Ovary (tissue), 10 donors: ENCODE measurements at regions of chr22 and their contacts with region 1.

Region 1: GRCh38 chr22:30262917-30263741 is 3.5 kb downstream of the OSM start:
- DNase-seq: peak; percentile 66 to 84 (median 83)
- H3K4me3 ChIP-seq: no peak overlapping the region
- H3K27ac ChIP-seq: no peak overlapping the region
- H3K4me1 ChIP-seq: no peaks in the 10 kb centered on the region
- H3K27me3 ChIP-seq: no peaks in the 10 kb centered on the region
- CTCF ChIP-seq: peak; percentile 95 to 97 (median 95)
- EP300 ChIP-seq: no peak
- POLR2A ChIP-seq: no peak

Region 2: DNA sequence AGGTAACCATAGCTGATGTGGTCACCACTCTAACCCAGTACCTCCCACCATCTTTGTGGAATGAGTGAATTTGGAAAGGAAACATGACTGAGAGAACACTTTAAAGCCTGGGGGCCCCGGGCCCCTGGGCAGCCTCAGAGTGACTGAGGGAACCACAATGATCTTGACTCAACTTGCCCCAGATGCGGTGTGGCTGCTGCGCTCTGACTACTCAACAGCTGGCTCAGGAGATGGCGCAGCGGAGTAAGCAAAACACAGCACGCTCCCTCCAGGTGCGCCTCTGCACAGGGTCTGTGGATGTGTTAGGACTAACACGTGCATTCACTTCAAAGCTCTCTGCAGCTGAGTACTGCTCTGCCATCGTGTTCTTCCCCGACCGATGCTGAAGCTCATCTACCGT is 118.1 kb after region 1 on chr22:
- intact Hi-C with region 1: loop called in 3 of 4 experiments (anchors 2 to 5 kb)
- DNase-seq: no peak
- H3K4me3 ChIP-seq: no peak overlapping the region
- H3K27ac ChIP-seq: no peak overlapping the region
- H3K4me1 ChIP-seq: no peaks in the 10 kb centered on the region
- H3K27me3 ChIP-seq: no peaks in the 10 kb centered on the region
- CTCF ChIP-seq: no peak
- EP300 ChIP-seq: no peak
- POLR2A ChIP-seq: no peak

Region 3: DNA sequence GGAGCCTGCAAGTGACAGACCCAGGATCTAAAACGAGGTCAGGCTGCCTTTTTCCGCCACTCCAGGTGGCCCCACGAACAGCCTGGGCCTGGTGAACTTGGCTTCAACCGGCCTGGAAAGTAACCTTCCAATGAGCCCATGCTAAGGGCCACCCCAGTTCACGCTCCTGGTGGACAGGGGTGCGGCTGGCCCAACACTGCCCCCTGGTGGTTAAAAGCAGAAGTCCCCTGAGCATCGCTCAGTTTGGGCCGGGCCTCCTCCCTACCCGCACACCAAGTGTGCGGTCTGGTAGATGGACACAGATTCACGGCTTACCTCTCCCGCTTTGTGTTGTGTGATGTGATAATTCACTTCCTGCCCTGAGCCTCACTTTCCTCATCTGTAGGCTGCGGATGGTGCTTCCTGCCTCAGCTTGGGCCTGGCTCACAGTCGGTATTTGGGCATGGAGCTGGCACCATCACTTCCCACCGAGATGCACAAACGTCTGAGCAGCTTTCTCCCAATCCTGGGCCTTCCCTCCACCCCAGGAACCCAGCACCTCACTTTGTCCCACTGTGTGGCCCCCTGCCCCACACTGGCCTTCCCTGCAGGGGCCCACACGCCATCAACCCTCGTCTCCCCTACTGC is 222.3 kb after region 1 on chr22:
- intact Hi-C with region 1: loop called in 3 of 4 experiments (anchors 2 to 10 kb)
- DNase-seq: peak; percentile 63 to 83 (median 74)
- H3K4me3 ChIP-seq: no peak overlapping the region
- H3K27ac ChIP-seq: no peak overlapping the region
- H3K4me1 ChIP-seq: no peaks in the 10 kb centered on the region
- H3K27me3 ChIP-seq: no peaks in the 10 kb centered on the region
- CTCF ChIP-seq: peak; percentile 90 to 93 (median 93)
- EP300 ChIP-seq: no peak
- POLR2A ChIP-seq: no peak